ENCODE measurements at regions of chr5 and their contacts with region 1.

Region 1: GRCh38 chr5:145681686-145682085 is 153.5 kb downstream of the PRELID2 start:
- DNase-seq: no peak
- ATAC-seq: peak; percentile 84

Region 2: DNA sequence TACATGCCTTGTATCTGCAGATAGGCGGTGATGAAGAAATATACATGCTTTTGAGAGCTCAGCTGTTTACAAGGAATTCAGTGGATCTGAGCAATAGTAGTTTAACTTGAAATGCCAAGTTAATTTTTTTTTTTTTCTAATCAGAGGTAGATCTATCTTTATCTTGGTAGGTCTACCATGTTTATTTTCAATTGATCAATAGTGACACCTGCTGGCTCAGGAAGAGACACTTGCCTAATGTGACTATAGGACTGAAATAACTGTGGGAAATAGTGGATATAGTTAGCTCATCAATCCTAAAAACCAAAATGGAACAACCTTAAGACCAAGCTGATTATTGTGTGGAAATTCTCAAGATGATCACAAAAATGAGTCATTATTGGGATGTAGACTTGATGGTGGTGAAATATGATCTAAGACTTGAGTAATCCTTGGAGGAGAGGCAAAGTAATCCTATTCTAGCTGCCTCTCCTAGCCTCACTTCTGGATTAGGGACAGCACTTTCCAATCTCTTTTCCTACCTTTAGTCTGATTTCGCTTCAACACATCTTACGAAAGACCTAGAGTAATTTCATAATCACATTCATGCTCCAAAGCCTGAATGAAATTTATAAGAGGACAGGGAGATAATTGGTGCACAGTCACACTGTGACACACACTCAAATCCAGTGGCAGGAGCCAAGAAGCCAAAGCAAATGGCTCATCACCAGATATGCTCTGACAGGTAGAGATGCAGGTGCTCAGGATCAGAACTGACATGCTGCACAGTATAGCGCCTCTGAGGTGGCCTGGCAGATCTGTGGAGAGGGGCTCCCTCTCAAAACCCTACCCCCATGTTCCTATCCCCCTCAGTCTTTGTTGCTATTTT is 1713.4 kb before region 1 on chr5:
- intact Hi-C with region 1: no loop called
- DNase-seq: no peak
- ATAC-seq: peak; percentile 66

Region 3: GRCh38 chr5:145834917-145835847 is 153.5 kb after region 1 on chr5 and contains the start of gene PRELID2:
- intact Hi-C with region 1: loop called (anchors 10 kb)
- DNase-seq: peak; percentile 94
- ATAC-seq: peak; percentile 96
- total RNA-seq, gene PRELID2: 22.4 TPM